Mammary epithelial cell (primary cell): ENCODE measurements at regions of chrX and their contacts with region 1.

Region 1: GRCh38 chrX:119118780-119119395 is 8.7 kb downstream of the KIAA1210 start:
- DNase-seq: peak; percentile 8
- H3K4me3 ChIP-seq: no peak overlapping the region
- H3K27ac ChIP-seq: no peak overlapping the region
- H3K4me1 ChIP-seq: no peaks in the 10 kb centered on the region
- H3K27me3 ChIP-seq: peaks cover 3% of the 10 kb centered on the region
- CTCF ChIP-seq: peak; percentile 73 to 79

Region 2: GRCh38 chrX:118974088-118974907 is 144.6 kb before region 1 on chrX and contains the start of gene LONRF3:
- CTCF ChIA-PET with region 1: no interaction called
- dilution Hi-C with region 1: no loop called
- in situ Hi-C with region 1: no loop called
- intact Hi-C with region 1: no loop called
- DNase-seq: no peak
- H3K4me3 ChIP-seq: peak within 1 kb of the TSS in 1 of 3 experiments; percentile 26
- H3K27ac ChIP-seq: no peak within 1 kb of the TSS
- H3K4me1 ChIP-seq: peaks cover 19% of the 10 kb centered on the region
- H3K27me3 ChIP-seq: peaks cover 10% of the 10 kb centered on the region
- CTCF ChIP-seq: no peak
- total RNA-seq, gene LONRF3: 3.2 TPM in 1 of 2 donors, not detected in the other

Region 3: DNA sequence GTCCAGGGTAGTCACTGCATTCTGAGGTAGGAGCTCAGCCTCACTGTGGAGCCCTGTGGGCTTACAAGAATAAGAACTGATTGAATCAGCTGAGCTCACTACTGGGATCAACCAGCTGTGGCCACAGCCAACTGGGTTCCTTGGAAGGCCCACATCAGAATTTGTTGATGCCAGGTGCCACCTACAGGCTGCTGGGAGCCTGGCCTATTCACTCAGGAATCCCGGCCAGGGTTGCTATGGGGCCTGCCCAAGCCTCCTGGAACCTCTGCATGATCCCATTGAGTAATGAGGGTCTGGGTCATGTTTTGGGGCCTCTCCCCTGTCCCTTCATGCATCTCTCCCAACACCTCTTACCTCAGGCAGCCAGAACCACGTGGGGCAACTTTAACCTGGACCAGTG is 62.6 kb after region 1 on chrX:
- CTCF ChIA-PET with region 1: no interaction called
- dilution Hi-C with region 1: no loop called
- in situ Hi-C with region 1: no loop called
- intact Hi-C with region 1: loop called (anchors 1 kb)
- DNase-seq: peak; percentile 9
- H3K4me3 ChIP-seq: no peak overlapping the region
- H3K27ac ChIP-seq: no peak overlapping the region
- H3K4me1 ChIP-seq: no peaks in the 10 kb centered on the region
- H3K27me3 ChIP-seq: no peaks in the 10 kb centered on the region
- CTCF ChIP-seq: peak; percentile 18 to 51

Region 4: GRCh38 chrX:119222932-119223331 is 104.0 kb after region 1 on chrX:
- CTCF ChIA-PET with region 1: no interaction called
- dilution Hi-C with region 1: no loop called
- in situ Hi-C with region 1: no loop called
- intact Hi-C with region 1: loop called (anchors 1 kb)
- DNase-seq: no peak
- H3K4me3 ChIP-seq: no peak overlapping the region
- H3K27ac ChIP-seq: no peak overlapping the region
- H3K4me1 ChIP-seq: no peaks in the 10 kb centered on the region
- H3K27me3 ChIP-seq: peaks cover 2% of the 10 kb centered on the region
- CTCF ChIP-seq: no peak

Region 5: DNA sequence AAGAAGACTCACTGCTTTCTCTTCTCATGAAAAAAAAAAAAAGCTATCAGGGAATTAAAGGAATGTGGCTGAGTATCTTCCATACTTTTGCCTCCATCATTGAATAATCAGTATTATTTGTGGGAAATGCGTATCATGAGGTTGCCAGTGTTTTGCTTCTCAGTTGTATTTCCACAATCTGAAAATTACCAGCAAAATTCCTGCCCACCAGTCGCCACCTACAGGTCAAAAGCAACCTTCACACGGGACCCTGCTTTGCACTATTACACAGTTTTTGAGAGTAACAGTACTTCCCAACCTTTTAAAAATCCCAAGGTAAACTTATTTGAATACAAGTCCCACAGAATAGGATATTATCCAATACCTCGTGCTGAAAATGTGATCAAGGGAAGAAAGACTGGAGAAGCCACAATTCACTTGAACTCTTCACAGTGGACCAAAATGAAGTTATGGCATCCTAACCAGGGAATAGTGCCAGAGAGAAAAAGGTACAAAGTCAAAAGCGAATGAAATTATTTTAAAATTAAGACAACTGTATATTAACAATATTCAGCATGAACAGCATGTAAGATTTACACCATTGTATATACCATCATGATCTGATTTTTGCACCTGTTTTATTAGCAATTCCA is 147.6 kb after region 1 on chrX:
- CTCF ChIA-PET with region 1: no interaction called
- dilution Hi-C with region 1: no loop called
- in situ Hi-C with region 1: no loop called
- intact Hi-C with region 1: loop called (anchors 1 kb)
- DNase-seq: peak; percentile 6
- H3K4me3 ChIP-seq: no peak overlapping the region
- H3K27ac ChIP-seq: no peak overlapping the region
- H3K4me1 ChIP-seq: no peaks in the 10 kb centered on the region
- H3K27me3 ChIP-seq: no peaks in the 10 kb centered on the region
- CTCF ChIP-seq: peak; percentile 62 to 81

Region 6: DNA sequence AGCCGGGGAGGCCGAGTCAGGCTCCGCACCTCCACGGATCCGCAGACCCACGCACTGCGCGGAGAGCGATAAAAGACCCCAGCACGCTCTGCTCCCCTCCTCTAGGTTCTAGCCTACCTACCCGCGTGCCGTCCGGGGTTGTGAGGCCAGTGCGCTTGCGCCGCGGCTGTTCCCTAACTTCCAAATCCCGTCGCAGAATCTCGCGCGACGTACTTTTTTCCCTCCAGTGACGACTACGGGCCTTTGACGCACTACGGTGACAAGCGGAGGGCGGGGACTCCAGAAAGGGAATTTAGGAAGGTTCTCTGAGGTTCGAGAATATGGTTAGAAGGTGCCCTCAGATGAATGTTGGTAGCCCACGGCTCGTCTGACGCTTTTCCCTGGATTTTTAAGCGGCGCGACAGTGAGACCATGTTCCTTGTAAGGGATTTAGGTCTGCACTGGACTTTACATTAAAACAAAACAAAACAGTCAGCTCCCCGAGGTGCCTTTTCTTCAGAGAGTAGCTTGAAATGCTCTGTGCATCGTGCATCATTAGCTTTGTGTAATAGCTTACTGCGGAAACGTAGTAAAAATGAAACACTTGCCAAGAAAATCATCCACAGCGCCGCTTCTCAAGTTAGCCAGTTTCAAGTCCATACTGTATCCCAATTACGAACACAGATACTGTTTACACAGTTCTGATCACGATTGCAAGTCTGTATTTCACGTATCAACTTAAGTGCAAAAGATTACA is 487.6 kb after region 1 on chrX and contains the start of gene NKRF:
- CTCF ChIA-PET with region 1: no interaction called
- dilution Hi-C with region 1: no loop called
- in situ Hi-C with region 1: no loop called
- intact Hi-C with region 1: no loop called
- DNase-seq: peak; percentile 80
- H3K4me3 ChIP-seq: peak within 1 kb of the TSS; percentile 48 to 90 (median 85)
- H3K27ac ChIP-seq: peak within 1 kb of the TSS; percentile 62
- H3K4me1 ChIP-seq: peaks cover 4% of the 10 kb centered on the region
- H3K27me3 ChIP-seq: no peaks in the 10 kb centered on the region
- CTCF ChIP-seq: no peak
- total RNA-seq, gene NKRF: 5.7 to 13.5 TPM